Right ventricle myocardium inferior (tissue), 1 donor: ENCODE measurements at regions of chr5 and their contacts with region 1.

Region 1: GRCh38 chr5:154690489-154690888 is 64.7 kb upstream of the LARP1 start:
- DNase-seq: no peak
- ATAC-seq: no peak

Region 2: GRCh38 chr5:154523709-154524108 is 166.8 kb before region 1 on chr5:
- intact Hi-C with region 1: no loop called
- DNase-seq: no peak
- ATAC-seq: peak; percentile 79

Region 3: GRCh38 chr5:154610321-154611154 is 80.0 kb before region 1 on chr5:
- intact Hi-C with region 1: no loop called
- DNase-seq: peak; percentile 75
- ATAC-seq: peak; percentile 93

Region 4: GRCh38 chr5:154740483-154740882 is 50.0 kb after region 1 on chr5:
- intact Hi-C with region 1: loop called (anchors 5 kb)
- DNase-seq: peak; percentile 79
- ATAC-seq: peak; percentile 91

Region 5: GRCh38 chr5:154977409-154977808 is 286.9 kb after region 1 on chr5:
- intact Hi-C with region 1: no loop called
- DNase-seq: no peak
- ATAC-seq: no peak